CD4-positive, alpha-beta memory T cell (primary cell): ENCODE measurements at regions of chr17 and their contacts with region 1.

Region 1: DNA sequence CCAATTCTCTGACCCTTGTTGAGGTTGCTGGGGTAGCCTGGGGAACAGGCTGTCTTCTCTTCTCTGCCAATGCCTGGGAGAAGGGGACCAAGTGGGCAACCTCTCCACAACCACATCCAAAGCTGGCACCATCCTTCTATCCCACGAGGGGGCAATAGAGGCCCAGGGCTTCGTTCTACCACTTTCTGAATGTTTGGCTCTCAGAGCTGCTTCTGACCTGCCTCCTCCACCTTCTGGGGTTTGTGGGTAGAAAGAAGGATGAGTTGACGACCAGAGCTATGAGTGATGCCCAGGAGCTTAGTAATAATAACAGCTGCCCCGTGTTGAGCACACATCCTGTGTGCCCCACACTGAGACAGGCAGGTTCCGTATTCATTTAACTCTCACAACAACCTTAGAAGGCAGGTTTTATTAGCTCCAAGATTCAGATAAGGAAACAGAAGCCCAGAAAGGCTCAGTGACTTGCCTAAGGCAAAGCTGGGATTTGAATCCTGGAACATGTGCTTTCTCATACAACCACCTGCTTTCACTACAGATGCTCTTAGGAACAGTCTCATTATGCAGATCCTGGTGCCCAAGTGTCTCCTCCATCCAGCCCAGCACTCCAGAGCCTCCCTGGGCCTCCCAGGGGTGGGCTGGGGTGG is 11.1 kb downstream of the TSPOAP1 start:
- DNase-seq: peak; percentile 80 to 84 (median 82)
- H3K4me3 ChIP-seq: peak overlapping the region in 1 of 2 donors; percentile 4
- H3K4me3 Mint-ChIP-seq: peak overlapping the region in 3 of 8 donors; percentile 18 to 48 (median 35)
- H3K27ac ChIP-seq: peak overlapping the region; percentile 31
- H3K27ac Mint-ChIP-seq: peak overlapping the region; percentile 80 to 95 (median 91)
- H3K4me1 ChIP-seq: peaks cover 18% of the 10 kb centered on the region
- H3K4me1 Mint-ChIP-seq: peaks cover 8 to 31% (median 14%) of the 10 kb centered on the region in 4 donors
- H3K27me3 ChIP-seq: no peaks in the 10 kb centered on the region
- H3K27me3 Mint-ChIP-seq: no peaks in the 10 kb centered on the region

Region 2: DNA sequence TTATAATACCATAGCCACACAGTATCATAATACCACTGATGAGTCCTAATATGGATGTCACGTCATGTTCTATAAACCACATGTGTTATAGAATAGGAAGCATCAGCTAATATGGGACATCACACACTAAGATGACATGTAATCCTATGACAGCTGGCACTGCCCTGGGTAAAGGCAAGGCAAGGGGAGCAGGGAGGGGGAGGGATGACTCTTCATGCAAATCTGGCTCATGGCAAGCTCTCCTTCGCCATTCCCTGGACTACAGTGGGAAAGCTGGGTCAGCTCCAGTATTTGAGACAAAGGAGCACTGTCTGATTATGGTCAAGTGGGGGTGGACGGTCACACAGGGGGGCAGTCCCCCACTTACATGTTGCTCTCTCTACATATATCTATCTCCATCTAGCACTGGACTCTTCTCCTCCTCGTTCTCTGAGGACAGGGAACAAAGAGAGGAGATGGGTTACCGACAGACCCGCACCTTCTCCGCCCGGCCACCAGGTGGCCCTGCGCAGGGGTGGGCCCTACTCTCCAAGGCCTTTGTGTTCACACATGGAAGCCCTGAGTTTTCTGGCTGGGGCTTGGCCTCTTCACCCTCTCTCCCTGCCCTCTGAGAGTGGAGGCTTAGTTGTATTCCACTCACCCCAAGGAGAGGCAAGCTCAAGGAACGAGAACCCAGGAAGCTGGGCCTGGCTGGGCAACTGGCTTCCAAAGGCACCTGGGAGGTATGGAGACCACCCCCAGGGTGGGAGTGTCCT is 13.4 kb before region 1 on chr17:
- CTCF ChIA-PET with region 1: interaction called, 52 read pairs
- POLR2A ChIA-PET with region 1: interaction called, 3 read pairs
- intact Hi-C with region 1: no loop called
- DNase-seq: peak in 4 of 5 donors; percentile 59 to 65 (median 62)
- H3K4me3 ChIP-seq: no peak overlapping the region
- H3K4me3 Mint-ChIP-seq: no peak overlapping the region
- H3K27ac ChIP-seq: no peak overlapping the region
- H3K27ac Mint-ChIP-seq: peak overlapping the region in 4 of 7 donors; percentile 0 to 70 (median 44)
- H3K4me1 ChIP-seq: peaks cover 4% of the 10 kb centered on the region
- H3K4me1 Mint-ChIP-seq: peaks cover 4 to 10% (median 5%) of the 10 kb centered on the region in 4 donors
- H3K27me3 ChIP-seq: no peaks in the 10 kb centered on the region
- H3K27me3 Mint-ChIP-seq: no peaks in the 10 kb centered on the region

Region 3: DNA sequence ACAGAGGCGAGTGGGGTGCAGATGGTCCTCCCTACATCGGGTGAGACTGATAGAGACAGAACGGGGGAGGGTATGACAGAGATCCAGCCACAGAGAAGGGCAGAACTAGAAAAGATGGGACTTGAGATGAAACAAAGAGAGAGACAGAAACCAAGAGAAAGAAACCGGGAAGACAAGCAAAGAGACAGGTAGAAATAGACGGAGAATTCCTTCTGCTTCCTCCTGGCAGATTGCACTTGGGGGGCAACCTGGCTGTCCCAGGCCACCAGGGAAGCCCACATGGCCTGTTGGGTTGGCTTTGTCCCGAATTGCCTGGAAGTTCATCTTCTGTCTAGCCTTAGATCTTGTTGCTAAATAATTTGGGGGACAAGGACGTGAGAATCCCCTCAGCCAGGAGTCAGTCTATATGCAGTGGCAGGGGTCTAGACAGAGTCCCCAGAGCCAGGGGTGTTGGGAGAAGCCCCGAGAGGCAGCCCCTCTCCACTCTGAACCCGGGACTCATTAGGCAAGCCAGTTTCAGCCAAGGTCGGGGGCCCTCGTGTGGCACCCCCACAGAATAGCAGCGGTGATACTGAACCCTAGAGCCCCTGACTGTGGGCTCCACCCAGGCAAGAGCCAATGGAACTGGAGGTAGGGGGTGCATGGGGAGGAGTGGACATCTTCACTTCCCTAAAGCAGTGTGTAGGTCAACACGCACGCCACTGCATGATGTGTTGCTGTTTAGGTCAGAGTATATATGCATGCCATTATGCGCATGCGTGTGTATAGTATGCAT is 11.7 kb after region 1 on chr17:
- CTCF ChIA-PET with region 1: interaction called, 45 read pairs
- POLR2A ChIA-PET with region 1: interaction called, 3,924 read pairs
- intact Hi-C with region 1: loop called (anchors 1 kb)
- DNase-seq: peak; percentile 67 to 79 (median 73)
- H3K4me3 ChIP-seq: peak overlapping the region; percentile 82 to 99
- H3K4me3 Mint-ChIP-seq: peak overlapping the region; percentile 88 to 99 (median 98)
- H3K27ac ChIP-seq: peak overlapping the region; percentile 97
- H3K27ac Mint-ChIP-seq: peak overlapping the region; percentile 93 to 99 (median 97)
- H3K4me1 ChIP-seq: peaks cover 47% of the 10 kb centered on the region
- H3K4me1 Mint-ChIP-seq: peaks cover 25 to 72% (median 36%) of the 10 kb centered on the region in 4 donors
- H3K27me3 ChIP-seq: no peaks in the 10 kb centered on the region
- H3K27me3 Mint-ChIP-seq: no peaks in the 10 kb centered on the region

Region 4: DNA sequence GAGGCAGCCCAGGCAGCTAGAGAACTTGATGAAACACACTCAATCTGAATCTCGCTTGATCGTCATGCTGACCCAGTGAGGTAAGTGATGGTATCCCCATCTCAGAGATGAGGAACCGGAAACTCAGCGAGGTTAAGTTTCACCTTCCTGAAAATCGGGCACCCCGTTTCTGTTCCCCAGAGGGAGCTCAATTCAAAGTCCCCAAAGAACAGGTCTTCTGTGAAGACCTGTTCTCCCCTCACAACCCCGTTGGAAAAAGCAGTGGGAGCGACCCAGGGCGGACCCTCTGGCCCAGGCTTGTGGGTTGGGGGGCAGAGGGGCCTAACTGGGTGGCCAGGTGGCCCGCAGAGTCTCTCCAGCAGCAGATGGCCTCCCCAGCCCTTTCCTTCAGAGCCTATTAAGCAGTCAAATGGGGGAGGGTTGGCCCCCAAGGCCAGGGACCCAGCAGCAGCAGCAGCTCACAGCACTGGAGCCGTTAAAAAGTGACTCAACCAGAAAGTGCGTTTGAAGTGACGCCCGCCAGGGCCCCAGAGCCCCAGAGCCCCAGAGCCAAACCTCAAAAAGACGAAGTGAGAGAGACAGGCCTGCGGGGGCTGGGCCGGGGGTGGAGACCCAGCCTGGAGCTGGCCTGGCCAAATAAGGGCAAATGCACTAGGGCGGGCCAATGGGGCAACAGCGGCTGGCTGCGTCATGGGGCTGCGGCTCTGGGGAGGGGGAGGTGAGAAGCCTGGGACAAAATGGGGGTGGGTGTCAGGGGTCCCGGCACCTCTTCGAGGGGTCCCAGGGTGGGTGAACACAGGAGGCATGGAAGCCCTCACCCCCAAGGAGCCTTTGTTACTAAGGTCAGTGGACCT is 20.3 kb after region 1 on chr17:
- CTCF ChIA-PET with region 1: interaction called, 510 read pairs
- POLR2A ChIA-PET with region 1: interaction called, 3,924 read pairs
- intact Hi-C with region 1: no loop called
- DNase-seq: peak; percentile 89 to 96 (median 91)
- H3K4me3 ChIP-seq: peak overlapping the region; percentile 99
- H3K4me3 Mint-ChIP-seq: peak overlapping the region; percentile 88 to 99 (median 98)
- H3K27ac ChIP-seq: peak overlapping the region; percentile 97
- H3K27ac Mint-ChIP-seq: peak overlapping the region; percentile 94 to 99 (median 97)
- H3K4me1 ChIP-seq: peaks cover 89% of the 10 kb centered on the region
- H3K4me1 Mint-ChIP-seq: peaks cover 41 to 98% (median 64%) of the 10 kb centered on the region in 4 donors
- H3K27me3 ChIP-seq: no peaks in the 10 kb centered on the region
- H3K27me3 Mint-ChIP-seq: no peaks in the 10 kb centered on the region

Region 5: DNA sequence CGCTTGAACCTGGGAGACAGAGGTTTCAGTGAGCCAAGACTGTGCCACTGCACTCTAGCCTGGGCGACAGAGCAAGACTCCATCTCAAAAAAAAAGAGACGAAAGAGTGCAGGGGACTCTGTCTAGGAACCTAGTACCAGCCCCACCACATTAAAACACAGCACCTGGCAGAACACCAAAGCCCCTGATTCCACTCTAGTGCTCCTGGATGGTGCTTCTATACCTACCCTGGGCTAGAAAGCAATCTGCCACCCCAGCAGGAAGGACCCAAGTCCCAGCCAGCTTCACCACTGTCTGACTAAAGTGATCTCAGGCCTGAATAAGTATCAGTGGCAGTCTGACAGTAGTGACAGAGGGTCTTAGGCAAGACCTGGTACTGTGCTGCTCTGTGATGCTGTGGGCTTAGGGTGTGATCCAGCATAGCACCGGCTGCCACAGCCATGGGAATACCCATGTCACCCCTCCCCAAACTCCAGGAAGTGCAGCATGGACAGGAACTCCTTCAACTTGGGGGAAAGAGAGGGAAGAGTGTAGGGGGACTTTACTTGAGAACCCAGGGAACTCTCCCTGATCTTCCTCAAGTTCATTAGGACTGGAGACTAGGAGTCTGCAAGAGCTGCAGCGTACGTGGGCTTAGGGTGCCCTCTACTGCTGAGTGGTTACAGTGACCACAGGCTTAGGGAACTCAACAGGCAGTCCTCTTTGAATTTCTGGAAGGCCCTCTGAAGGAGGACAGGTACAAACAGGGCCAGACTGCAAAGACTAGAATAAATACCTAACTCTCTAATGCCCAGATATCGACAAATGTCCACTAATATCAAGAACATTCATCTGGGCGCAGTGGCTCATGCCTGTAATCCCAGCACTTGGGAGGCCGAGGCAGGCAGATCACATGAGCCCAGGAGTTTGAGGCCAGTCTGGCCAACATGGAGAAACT is 129.8 kb after region 1 on chr17:
- CTCF ChIA-PET with region 1: interaction called, 20 read pairs
- POLR2A ChIA-PET with region 1: interaction called, 5 read pairs
- intact Hi-C with region 1: loop called (anchors 1 kb)
- DNase-seq: peak; percentile 45 to 57 (median 49)
- H3K4me3 ChIP-seq: no peak overlapping the region
- H3K4me3 Mint-ChIP-seq: no peak overlapping the region
- H3K27ac ChIP-seq: no peak overlapping the region
- H3K27ac Mint-ChIP-seq: peak overlapping the region in 2 of 7 donors; percentile 26 to 38
- H3K4me1 ChIP-seq: no peaks in the 10 kb centered on the region
- H3K4me1 Mint-ChIP-seq: peaks cover 0 to 10% (median 7%) of the 10 kb centered on the region in 4 donors
- H3K27me3 ChIP-seq: no peaks in the 10 kb centered on the region
- H3K27me3 Mint-ChIP-seq: no peaks in the 10 kb centered on the region

Region 6: GRCh38 chr17:58487589-58488427 is 170.3 kb after region 1 on chr17 and contains the start of gene HSF5:
- CTCF ChIA-PET with region 1: interaction called, 41 read pairs
- POLR2A ChIA-PET with region 1: interaction called, 20 read pairs
- intact Hi-C with region 1: no loop called
- DNase-seq: peak; percentile 76 to 83 (median 82)
- H3K4me3 ChIP-seq: peak within 1 kb of the TSS; percentile 46 to 47
- H3K4me3 Mint-ChIP-seq: peak within 1 kb of the TSS; percentile 50 to 81 (median 70)
- H3K27ac ChIP-seq: peak within 1 kb of the TSS; percentile 20
- H3K27ac Mint-ChIP-seq: peak within 1 kb of the TSS in 5 of 7 donors; percentile 15 to 72 (median 47)
- H3K4me1 ChIP-seq: peaks cover 4% of the 10 kb centered on the region
- H3K4me1 Mint-ChIP-seq: peaks cover 5 to 15% (median 5%) of the 10 kb centered on the region in 4 donors
- H3K27me3 ChIP-seq: no peaks in the 10 kb centered on the region
- H3K27me3 Mint-ChIP-seq: no peaks in the 10 kb centered on the region
- total RNA-seq, gene HSF5: 2.1 to 2.4 TPM

Region 7: DNA sequence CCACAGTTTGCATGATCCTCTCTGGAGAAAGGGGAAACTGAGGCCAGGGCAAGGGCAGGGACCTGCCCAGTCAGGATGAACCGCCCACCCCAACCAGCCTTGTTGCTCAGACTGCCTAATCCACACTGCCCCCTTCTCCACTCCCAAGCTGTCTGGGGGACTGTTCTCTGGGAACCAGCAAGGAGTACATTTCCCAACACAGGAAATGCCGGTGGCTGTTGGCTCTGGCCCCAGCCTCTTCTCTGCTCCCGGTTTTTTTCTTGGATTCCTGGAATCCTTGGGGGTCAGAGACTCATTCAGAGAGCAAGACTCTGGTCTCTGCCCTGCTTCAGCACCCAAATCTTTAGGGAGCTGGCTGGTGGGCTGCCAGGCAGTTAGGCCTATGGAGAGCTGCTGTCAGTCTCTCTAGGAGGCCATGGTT is 207.6 kb after region 1 on chr17:
- CTCF ChIA-PET with region 1: no interaction called
- POLR2A ChIA-PET with region 1: no interaction called
- intact Hi-C with region 1: no loop called
- DNase-seq: no peak
- H3K4me3 ChIP-seq: no peak overlapping the region
- H3K4me3 Mint-ChIP-seq: no peak overlapping the region
- H3K27ac ChIP-seq: no peak overlapping the region
- H3K27ac Mint-ChIP-seq: no peak overlapping the region
- H3K4me1 ChIP-seq: no peaks in the 10 kb centered on the region
- H3K4me1 Mint-ChIP-seq: peaks cover 0 to 5% (median 0%) of the 10 kb centered on the region in 4 donors
- H3K27me3 ChIP-seq: no peaks in the 10 kb centered on the region
- H3K27me3 Mint-ChIP-seq: peaks cover 0 to 3% of the 10 kb centered on the region in 2 donors

Region 8: GRCh38 chr17:58813712-58814111 is 496.2 kb after region 1 on chr17:
- CTCF ChIA-PET with region 1: no interaction called
- POLR2A ChIA-PET with region 1: no interaction called
- intact Hi-C with region 1: no loop called
- DNase-seq: no peak
- H3K4me3 ChIP-seq: no peak overlapping the region
- H3K4me3 Mint-ChIP-seq: no peak overlapping the region
- H3K27ac ChIP-seq: no peak overlapping the region
- H3K27ac Mint-ChIP-seq: no peak overlapping the region
- H3K4me1 ChIP-seq: no peaks in the 10 kb centered on the region
- H3K4me1 Mint-ChIP-seq: no peaks in the 10 kb centered on the region
- H3K27me3 ChIP-seq: no peaks in the 10 kb centered on the region
- H3K27me3 Mint-ChIP-seq: peaks cover 4 to 10% of the 10 kb centered on the region in 2 donors